ENCODE measurements at regions of chr3 and their contacts with region 1.

Region 1: GRCh38 chr3:141913150-141913811 is 36.8 kb downstream of the ATP1B3 start:
- DNase-seq: peak; percentile 69
- ATAC-seq: peak; percentile 78
- H3K4me3 Mint-ChIP-seq: no peak overlapping the region
- H3K27ac Mint-ChIP-seq: peak overlapping the region; percentile 50
- H3K4me1 Mint-ChIP-seq: peaks cover 9% of the 10 kb centered on the region
- H3K27me3 Mint-ChIP-seq: no peaks in the 10 kb centered on the region

Region 2: GRCh38 chr3:141875374-141875892 is 37.8 kb before region 1 on chr3:
- CTCF ChIA-PET with region 1: interaction called, 24 read pairs
- DNase-seq: peak; percentile 91
- ATAC-seq: peak; percentile 63
- H3K4me3 Mint-ChIP-seq: peak overlapping the region; percentile 90
- H3K27ac Mint-ChIP-seq: peak overlapping the region; percentile 95
- H3K4me1 Mint-ChIP-seq: peaks cover 30% of the 10 kb centered on the region
- H3K27me3 Mint-ChIP-seq: no peaks in the 10 kb centered on the region

Region 3: DNA sequence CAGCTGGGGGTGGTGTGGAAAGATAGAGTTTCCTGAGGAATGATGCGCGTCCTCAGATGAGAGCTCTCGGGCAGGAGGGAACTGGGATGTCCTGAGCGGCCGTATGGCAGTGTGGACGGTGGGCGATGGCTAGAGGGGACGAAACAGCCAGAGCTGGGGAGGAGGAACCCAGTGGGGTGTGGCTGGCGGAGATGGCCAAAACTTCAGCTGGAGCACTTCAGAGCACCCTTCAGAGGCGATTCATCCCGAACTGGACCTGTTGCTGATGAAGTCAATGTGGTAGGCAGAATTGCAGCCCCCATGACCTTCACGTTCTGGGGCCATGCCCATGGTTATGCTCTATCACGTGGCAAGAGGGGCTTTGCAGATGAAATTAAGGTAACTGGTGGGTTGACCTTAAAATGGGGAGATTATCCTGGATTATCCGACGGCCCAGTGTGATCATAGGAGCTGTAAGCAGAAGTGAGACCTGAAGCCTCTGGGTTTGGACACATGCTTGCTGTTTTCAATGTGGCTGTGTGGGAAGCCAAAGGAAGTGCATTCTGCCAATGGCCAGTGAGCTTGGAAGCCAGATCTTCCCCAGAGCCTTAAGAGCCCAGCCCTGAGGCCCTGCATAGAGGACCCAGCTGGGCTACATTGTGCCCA is 15.5 kb after region 1 on chr3:
- CTCF ChIA-PET with region 1: interaction called, 13 read pairs
- DNase-seq: peak; percentile 21
- ATAC-seq: no peak
- H3K4me3 Mint-ChIP-seq: no peak overlapping the region
- H3K27ac Mint-ChIP-seq: no peak overlapping the region
- H3K4me1 Mint-ChIP-seq: no peaks in the 10 kb centered on the region
- H3K27me3 Mint-ChIP-seq: no peaks in the 10 kb centered on the region

Region 4: GRCh38 chr3:142077849-142078500 is 164.7 kb after region 1 on chr3:
- CTCF ChIA-PET with region 1: no interaction called
- DNase-seq: no peak
- ATAC-seq: no peak
- H3K4me3 Mint-ChIP-seq: no peak overlapping the region
- H3K27ac Mint-ChIP-seq: no peak overlapping the region
- H3K4me1 Mint-ChIP-seq: no peaks in the 10 kb centered on the region
- H3K27me3 Mint-ChIP-seq: no peaks in the 10 kb centered on the region

Measured in activated CD8-positive, alpha-beta memory T cell treated with anti-CD3 and anti-CD28 coated beads, Interleukin-2, amount 10 ng/mL, durations not matched to agents 7 days and 5 days (primary cell).